ENCODE measurements at regions of chr1 and their contacts with region 1.

Region 1: GRCh38 chr1:198157241-198157846 is 546 bp downstream of the NEK7 start:
- DNase-seq: peak; percentile 87
- H3K4me3 Mint-ChIP-seq: peak overlapping the region; percentile 98
- H3K27ac Mint-ChIP-seq: peak overlapping the region; percentile 99
- H3K4me1 Mint-ChIP-seq: peaks cover 42% of the 10 kb centered on the region
- H3K27me3 Mint-ChIP-seq: no peaks in the 10 kb centered on the region

Region 2: GRCh38 chr1:197768014-197768791 is 389.1 kb before region 1 on chr1:
- CTCF ChIA-PET with region 1: no interaction called
- POLR2A ChIA-PET with region 1: interaction called, 12 read pairs
- DNase-seq: no peak
- H3K4me3 Mint-ChIP-seq: no peak overlapping the region
- H3K27ac Mint-ChIP-seq: no peak overlapping the region
- H3K4me1 Mint-ChIP-seq: peaks cover 62% of the 10 kb centered on the region
- H3K27me3 Mint-ChIP-seq: no peaks in the 10 kb centered on the region

Region 3: DNA sequence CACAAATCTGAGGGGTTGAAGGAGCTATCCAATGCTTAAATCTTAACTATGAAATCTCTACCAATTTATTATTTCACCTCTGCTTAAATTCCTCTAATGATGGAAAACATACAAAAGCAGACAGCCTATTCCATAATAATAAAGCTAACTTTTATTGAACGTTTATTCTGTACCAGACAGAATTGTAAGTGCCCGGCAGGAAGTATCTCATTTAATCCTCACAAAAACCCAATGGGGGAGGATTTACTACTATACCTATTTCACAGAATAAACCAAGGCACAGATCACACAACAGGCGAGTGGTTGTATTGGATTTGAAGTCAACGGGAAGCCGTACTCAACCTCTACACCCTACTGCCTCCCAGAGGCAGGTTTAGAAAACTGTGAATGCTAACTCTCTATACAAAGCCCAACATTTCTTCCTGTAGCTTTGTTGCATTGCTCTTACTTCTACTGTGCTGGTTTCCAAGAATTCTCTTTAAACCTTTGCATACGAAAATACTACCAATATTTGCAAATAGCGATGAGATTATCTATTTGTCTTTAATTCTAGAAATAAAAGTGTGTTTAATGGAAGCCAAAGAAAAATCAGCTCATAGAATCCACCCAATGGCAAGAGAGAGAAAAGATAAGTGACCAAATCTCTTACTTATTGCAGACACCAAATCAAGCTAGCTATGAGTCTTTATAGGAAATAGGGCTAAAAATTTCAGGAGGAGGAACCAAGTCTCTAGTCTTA is 288.4 kb before region 1 on chr1:
- CTCF ChIA-PET with region 1: no interaction called
- POLR2A ChIA-PET with region 1: no interaction called
- DNase-seq: peak; percentile 56
- H3K4me3 Mint-ChIP-seq: no peak overlapping the region
- H3K27ac Mint-ChIP-seq: no peak overlapping the region
- H3K4me1 Mint-ChIP-seq: peaks cover 2% of the 10 kb centered on the region
- H3K27me3 Mint-ChIP-seq: peaks cover 14% of the 10 kb centered on the region

Region 4: GRCh38 chr1:197994907-197995407 is 162.4 kb before region 1 on chr1:
- CTCF ChIA-PET with region 1: no interaction called
- POLR2A ChIA-PET with region 1: no interaction called
- DNase-seq: no peak
- H3K4me3 Mint-ChIP-seq: no peak overlapping the region
- H3K27ac Mint-ChIP-seq: no peak overlapping the region
- H3K4me1 Mint-ChIP-seq: peaks cover 3% of the 10 kb centered on the region
- H3K27me3 Mint-ChIP-seq: peaks cover 4% of the 10 kb centered on the region

Region 5: DNA sequence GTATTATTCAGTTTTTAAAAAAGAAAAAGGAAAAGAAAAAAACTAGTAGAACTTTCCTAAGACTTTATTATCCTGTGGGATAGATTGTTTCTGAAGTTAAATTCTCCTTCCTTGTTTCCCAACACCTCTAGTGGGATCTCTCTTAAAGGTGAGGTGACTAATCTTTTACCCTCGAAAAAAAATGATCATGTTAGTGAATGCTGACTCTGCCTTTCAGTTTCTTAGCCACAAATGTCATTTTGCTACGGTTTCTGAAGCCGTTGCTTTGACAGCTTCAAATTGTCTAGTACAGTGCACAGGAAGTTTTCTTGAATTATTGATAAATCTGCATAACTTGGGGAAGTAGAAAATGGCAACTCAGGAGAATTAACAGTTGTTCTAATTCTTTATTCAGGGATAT is 13.5 kb before region 1 on chr1:
- CTCF ChIA-PET with region 1: interaction called, 11 read pairs
- POLR2A ChIA-PET with region 1: interaction called, 3 read pairs
- DNase-seq: no peak
- H3K4me3 Mint-ChIP-seq: no peak overlapping the region
- H3K27ac Mint-ChIP-seq: no peak overlapping the region
- H3K4me1 Mint-ChIP-seq: peaks cover 6% of the 10 kb centered on the region
- H3K27me3 Mint-ChIP-seq: no peaks in the 10 kb centered on the region

Region 6: GRCh38 chr1:198174297-198174696 is 17.0 kb after region 1 on chr1:
- CTCF ChIA-PET with region 1: interaction called, 12 read pairs
- POLR2A ChIA-PET with region 1: no interaction called
- DNase-seq: no peak
- H3K4me3 Mint-ChIP-seq: peak overlapping the region; percentile 22
- H3K27ac Mint-ChIP-seq: peak overlapping the region; percentile 81
- H3K4me1 Mint-ChIP-seq: peaks cover 86% of the 10 kb centered on the region
- H3K27me3 Mint-ChIP-seq: no peaks in the 10 kb centered on the region

Measured in activated CD4-positive, alpha-beta T cell treated with anti-CD3 and anti-CD28 coated beads, Interleukin-2, amount 10 ng/mL, durations not matched to agents 7 days and 5 days (primary cell).